ENCODE measurements at regions of chrX and their contacts with region 1.

Region 1: GRCh38 chrX:107025545-107025944 is 25.5 kb upstream of the MORC4 start:
- DNase-seq: no peak
- ATAC-seq: peak in 1 of 4 donors; percentile 50
- H3K4me3 ChIP-seq: no peak overlapping the region
- H3K27ac ChIP-seq: no peak overlapping the region
- H3K4me1 ChIP-seq: no peaks in the 10 kb centered on the region
- H3K27me3 ChIP-seq: peaks cover 0 to 21% (median 0%) of the 10 kb centered on the region in 9 donors
- CTCF ChIP-seq: peak in 11 of 12 donors; percentile 27 to 53 (median 35)
- POLR2A ChIP-seq: no peak

Region 2: GRCh38 chrX:107304141-107304540 is 278.6 kb after region 1 on chrX:
- intact Hi-C with region 1: no loop called
- DNase-seq: no peak
- ATAC-seq: no peak
- H3K4me3 ChIP-seq: no peak overlapping the region
- H3K27ac ChIP-seq: no peak overlapping the region
- H3K4me1 ChIP-seq: no peaks in the 10 kb centered on the region
- H3K27me3 ChIP-seq: peaks cover 0 to 33% (median 0%) of the 10 kb centered on the region in 9 donors
- CTCF ChIP-seq: no peak
- POLR2A ChIP-seq: no peak

Region 3: DNA sequence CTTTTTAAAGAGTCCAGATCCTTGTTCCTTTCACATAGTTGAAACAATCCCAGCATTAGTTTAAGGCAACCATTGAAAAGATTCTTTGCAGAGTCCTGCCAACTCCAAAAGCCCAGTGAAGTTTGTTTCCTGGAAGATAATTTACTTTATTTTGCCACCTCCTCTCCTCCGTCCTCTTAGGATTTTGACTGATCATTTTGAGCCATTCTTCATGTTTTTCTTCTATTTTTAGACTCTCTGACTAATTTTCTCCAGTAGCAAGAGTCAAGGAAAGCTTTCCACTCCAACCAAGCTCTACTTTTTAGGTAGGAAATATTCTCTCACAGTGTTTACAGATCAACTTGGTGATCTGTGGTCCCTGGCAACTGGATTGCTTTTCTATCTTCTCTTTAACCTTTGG is 762.3 kb after region 1 on chrX:
- intact Hi-C with region 1: loop called in 1 of 10 experiments (anchors 10 kb)
- DNase-seq: no peak
- ATAC-seq: peak in 1 of 4 donors; percentile 9
- H3K4me3 ChIP-seq: no peak overlapping the region
- H3K27ac ChIP-seq: no peak overlapping the region
- H3K4me1 ChIP-seq: no peaks in the 10 kb centered on the region
- H3K27me3 ChIP-seq: peaks cover 0 to 20% (median 0%) of the 10 kb centered on the region in 9 donors
- CTCF ChIP-seq: no peak
- POLR2A ChIP-seq: no peak